A549 (cell line): ENCODE measurements at regions of chr12 and their contacts with region 1.

Region 1: DNA sequence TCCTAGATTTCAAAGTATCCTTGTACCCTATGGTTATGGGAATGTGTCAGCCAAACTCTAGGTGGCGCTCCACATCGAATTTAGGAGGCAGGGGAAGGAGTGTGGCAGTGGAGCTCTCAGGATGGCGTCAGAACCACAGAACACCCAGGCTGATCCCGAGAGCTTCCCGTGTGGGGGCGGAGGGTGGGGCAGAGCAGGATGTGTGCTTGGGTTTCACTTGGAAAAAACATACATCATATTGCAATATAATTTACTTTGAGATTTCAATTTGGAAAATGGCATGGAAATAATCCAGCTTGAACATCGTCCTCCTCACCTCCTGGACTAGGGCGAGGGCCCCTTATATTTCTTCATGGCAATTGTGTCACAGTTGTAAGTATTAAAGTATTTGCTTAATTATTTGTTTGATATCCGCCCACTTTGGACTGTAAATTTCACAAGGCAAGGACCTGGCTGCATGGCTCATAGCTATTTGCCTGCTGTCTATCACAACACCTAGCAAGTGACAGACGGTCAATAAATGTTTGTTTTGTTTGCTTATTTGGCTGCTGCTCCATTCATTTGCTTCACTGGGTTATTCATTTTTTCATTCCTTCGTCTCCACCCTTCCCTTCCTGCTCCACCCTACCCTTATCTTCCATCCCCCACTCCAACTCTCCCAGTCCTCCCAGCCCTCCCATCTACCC is 221.5 kb upstream of the HMGA2 start:
- DNase-seq: peak; percentile 87 to 89
- ATAC-seq: peak; percentile 95 to 99
- H3K4me3 ChIP-seq: peak overlapping the region; percentile 39
- H3K27ac ChIP-seq: peak overlapping the region; percentile 66 to 79
- H3K4me1 ChIP-seq: peaks cover 20% of the 10 kb centered on the region
- CTCF ChIP-seq: peak; percentile 90
- EP300 ChIP-seq: peak in 1 of 2 experiments; percentile 38; a peak in 1 of 5 replicates
- POLR2A ChIP-seq: no peak
- RAD21 ChIP-seq: peak; percentile 92 to 97

Region 2: DNA sequence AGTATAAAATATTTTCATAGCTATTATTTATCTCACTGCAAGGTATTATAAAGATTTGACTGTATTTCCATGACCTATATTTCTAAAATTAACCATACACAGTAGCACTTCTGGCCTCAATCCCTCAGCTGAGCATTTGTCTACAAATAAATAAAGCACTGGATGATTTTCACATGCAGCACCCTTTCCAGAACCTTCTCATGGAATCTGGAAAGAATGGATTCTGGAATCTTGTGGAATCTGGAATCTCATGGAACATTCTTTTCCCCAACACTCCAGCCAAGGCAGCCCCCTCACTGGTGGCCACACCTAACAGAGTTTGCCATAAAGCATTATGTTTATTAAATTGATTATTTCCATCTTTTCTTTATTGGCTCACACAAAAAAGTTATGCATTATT is 125.0 kb before region 1 on chr12:
- CTCF ChIA-PET with region 1: no interaction called
- POLR2A ChIA-PET with region 1: no interaction called
- DNase-seq: no peak
- ATAC-seq: no peak
- H3K4me3 ChIP-seq: no peak overlapping the region
- H3K27ac ChIP-seq: no peak overlapping the region
- H3K4me1 ChIP-seq: no peaks in the 10 kb centered on the region
- CTCF ChIP-seq: no peak
- EP300 ChIP-seq: no peak
- POLR2A ChIP-seq: no peak
- RAD21 ChIP-seq: no peak

Region 3: GRCh38 chr12:65556681-65557437 is 45.9 kb before region 1 on chr12:
- CTCF ChIA-PET with region 1: interaction called, 48 read pairs
- POLR2A ChIA-PET with region 1: no interaction called
- DNase-seq: peak; percentile 77 to 82
- ATAC-seq: peak; percentile 100
- H3K4me3 ChIP-seq: no peak overlapping the region
- H3K27ac ChIP-seq: peak overlapping the region; percentile 41 to 42; a peak in 2 of 6 replicates
- H3K4me1 ChIP-seq: no peaks in the 10 kb centered on the region
- CTCF ChIP-seq: peak; percentile 91
- EP300 ChIP-seq: no peak
- POLR2A ChIP-seq: no peak
- RAD21 ChIP-seq: peak; percentile 95 to 96

Region 4: DNA sequence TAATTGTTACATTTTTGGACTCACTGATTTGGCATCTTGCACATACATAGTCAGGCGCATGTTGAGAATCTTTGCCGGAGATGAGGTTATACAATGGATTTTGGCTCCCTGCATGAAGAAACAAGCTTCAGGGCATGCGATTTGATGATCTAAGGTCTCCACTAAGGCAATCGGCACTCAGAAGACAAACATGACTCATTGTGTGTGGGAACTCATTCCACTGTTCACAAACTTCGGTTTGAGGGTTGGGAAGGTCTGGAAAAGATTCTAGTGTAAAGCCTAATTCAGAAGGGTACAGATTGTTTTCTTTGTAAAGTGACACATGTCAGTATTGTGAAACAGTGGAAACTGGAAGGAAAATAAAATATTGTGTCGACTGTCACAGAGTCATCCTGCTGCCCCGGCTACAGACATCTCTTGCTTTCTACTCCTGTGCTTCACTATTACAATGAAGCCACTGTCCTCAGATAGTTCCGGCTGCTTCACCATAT is 28.9 kb after region 1 on chr12:
- CTCF ChIA-PET with region 1: interaction called, 16 read pairs
- POLR2A ChIA-PET with region 1: interaction called, 3 read pairs
- DNase-seq: peak; percentile 58 to 95
- ATAC-seq: peak; percentile 86 to 89
- H3K4me3 ChIP-seq: no peak overlapping the region; the same call in 2 of the 3 replicates
- H3K27ac ChIP-seq: peak overlapping the region; percentile 78 to 82
- H3K4me1 ChIP-seq: peaks cover 50% of the 10 kb centered on the region
- CTCF ChIP-seq: no peak
- EP300 ChIP-seq: peak; percentile 83 to 84
- POLR2A ChIP-seq: no peak
- RAD21 ChIP-seq: peak in 1 of 2 experiments; percentile 58; a peak in 3 of 5 replicates

Region 5: GRCh38 chr12:65681226-65681625 is 78.5 kb after region 1 on chr12:
- CTCF ChIA-PET with region 1: interaction called, 16 read pairs
- POLR2A ChIA-PET with region 1: no interaction called
- DNase-seq: no peak
- ATAC-seq: no peak
- H3K4me3 ChIP-seq: no peak overlapping the region
- H3K27ac ChIP-seq: no peak overlapping the region
- H3K4me1 ChIP-seq: no peaks in the 10 kb centered on the region
- CTCF ChIP-seq: no peak
- EP300 ChIP-seq: no peak
- POLR2A ChIP-seq: no peak
- RAD21 ChIP-seq: no peak

Region 6: DNA sequence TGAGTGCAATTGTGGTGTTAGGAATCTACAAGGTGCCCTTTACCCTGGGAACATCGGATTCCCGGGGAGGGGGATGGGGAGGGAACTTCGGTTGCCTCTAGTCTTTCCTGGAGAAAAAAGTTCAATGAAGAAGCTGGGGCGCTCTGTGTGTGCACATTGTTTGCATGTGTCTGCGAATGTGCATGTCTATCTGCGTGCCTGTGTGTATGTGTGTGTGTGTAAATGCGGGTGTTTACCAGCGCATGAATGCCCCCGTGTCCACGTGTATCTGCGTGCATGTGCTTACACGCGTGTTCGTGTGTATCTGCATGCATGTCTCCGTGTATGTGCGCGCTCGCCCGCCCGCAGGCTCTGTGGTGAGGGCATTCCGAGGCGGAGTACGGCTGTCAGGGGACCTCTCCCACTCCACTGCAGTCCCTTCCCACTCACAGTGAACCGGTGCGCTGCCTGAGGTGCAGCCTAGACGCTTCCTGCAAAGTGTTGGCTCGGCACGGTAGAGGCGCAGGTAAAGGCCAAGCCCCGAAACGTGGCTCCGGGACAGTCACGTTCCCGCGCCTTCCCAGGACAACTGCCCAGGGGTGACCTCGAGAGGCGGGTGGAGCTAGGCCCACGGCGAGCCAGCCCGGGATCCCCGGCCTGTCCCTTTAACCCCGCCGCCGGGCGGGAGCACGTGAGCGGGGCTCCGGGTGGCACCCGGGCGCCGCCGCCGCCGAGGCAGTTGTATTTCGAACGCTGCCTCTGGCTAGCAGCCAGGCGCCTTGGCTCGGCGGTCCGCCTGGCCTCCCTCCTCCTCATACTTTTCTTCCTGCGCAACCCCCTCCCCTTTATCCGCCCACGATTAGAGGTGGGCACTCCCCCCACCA is 221.0 kb after region 1 on chr12:
- CTCF ChIA-PET with region 1: interaction called, 19 read pairs
- POLR2A ChIA-PET with region 1: interaction called, 3 read pairs
- DNase-seq: peak; percentile 53 to 76
- ATAC-seq: peak; percentile 48 to 61
- H3K4me3 ChIP-seq: peak overlapping the region; percentile 80
- H3K27ac ChIP-seq: peak overlapping the region; percentile 69 to 90
- H3K4me1 ChIP-seq: peaks cover 13% of the 10 kb centered on the region; the same call in 1 of the 3 replicates
- CTCF ChIP-seq: no peak
- EP300 ChIP-seq: no peak
- POLR2A ChIP-seq: no peak
- RAD21 ChIP-seq: no peak

Region 7: GRCh38 chr12:66087365-66087943 is 484.7 kb after region 1 on chr12:
- CTCF ChIA-PET with region 1: interaction called, 15 read pairs
- POLR2A ChIA-PET with region 1: no interaction called
- DNase-seq: peak; percentile 45 to 69
- ATAC-seq: peak; percentile 83 to 91; a peak in 5 of 6 replicates
- H3K4me3 ChIP-seq: no peak overlapping the region
- H3K27ac ChIP-seq: no peak overlapping the region
- H3K4me1 ChIP-seq: 0 out of 3 replicates have a peak, but pooled peaks cover 3% of the 10 kb centered on the region
- CTCF ChIP-seq: peak; percentile 86
- EP300 ChIP-seq: no peak
- POLR2A ChIP-seq: no peak
- RAD21 ChIP-seq: peak; percentile 88 to 92